ENCODE measurements at regions of chr2 and their contacts with region 1.

Region 1: DNA sequence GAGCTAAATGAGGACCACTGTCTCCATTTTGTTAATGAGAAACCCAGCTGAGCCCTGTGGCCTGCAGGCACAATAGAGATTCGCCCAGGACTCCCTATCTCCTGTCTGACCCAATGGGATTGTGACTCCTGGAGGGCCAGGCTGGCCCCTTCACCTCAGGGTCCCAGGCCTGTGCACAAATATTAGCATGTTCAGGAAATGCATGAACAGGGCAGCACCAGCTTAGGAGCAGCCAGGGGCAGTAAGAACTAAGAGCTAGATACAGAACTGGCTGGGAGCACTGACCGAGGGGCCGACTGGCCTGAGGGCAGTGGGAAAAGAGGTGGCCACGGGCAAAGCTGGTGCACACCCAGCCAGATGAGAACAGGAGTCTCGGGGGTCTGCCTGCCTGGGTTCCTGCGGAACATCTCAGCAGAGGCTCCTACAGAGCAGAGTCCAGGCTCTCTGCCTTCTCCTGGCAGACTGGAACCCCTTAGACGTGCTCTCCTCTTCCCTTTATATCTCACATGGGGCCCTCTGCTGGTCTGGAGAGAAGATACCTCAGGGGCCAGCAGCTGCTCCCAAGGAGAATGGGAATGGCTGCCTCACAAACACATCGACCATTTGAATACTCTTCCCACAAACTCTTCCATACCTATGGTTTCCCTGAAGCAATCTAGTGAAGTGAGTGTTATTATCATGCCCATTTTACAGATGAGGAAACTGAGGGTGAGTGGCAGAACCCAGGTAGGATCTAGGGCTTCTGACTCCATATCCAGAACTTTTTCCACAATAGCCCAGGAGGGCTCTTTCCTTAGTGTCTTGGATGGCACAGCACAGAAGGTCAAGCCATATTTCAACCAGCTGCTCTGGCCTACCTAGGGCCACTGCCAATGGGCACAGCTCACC is 77.6 kb upstream of the OTOF start:
- DNase-seq: peak; percentile 37 to 47
- ATAC-seq: peak in 1 of 2 experiments; percentile 79; a peak in 3 of 6 replicates
- H3K4me3 ChIP-seq: no peak overlapping the region
- H3K27ac ChIP-seq: no peak overlapping the region
- H3K4me1 ChIP-seq: no peaks in the 10 kb centered on the region
- CTCF ChIP-seq: peak; percentile 20; the same call in 2 of the 3 replicates
- EP300 ChIP-seq: no peak
- POLR2A ChIP-seq: no peak
- RAD21 ChIP-seq: peak in 1 of 2 experiments; percentile 10; a peak in 1 of 5 replicates

Region 2: DNA sequence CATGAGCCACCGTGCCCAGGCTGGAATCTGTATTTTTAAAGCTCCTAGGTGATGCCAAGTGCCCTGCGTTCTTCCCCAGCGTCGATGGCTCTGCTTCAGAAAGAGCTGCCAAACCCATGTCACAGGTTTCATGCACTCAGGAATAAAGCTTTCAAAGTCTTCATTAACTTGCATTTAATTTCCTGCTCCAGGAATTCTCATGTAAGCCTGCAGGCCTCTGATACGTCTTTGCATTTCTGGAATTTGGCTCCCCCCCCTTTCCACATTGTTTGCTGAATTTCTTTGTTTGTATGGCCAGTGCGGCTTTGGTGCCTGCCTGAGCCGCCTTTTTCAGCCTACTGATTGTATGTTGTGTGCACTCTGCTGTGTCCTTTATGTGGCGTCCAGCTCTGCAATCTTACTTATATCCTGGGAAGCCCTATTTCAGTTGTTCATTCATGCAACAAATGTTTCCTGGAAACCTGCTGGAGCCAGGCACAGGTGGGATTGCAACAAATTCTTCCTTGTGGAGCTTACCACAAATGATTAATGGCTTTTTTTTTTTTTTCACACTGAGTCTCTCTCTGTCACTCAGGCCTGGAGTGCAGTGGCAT is 59.7 kb before region 1 on chr2:
- CTCF ChIA-PET with region 1: no interaction called
- POLR2A ChIA-PET with region 1: no interaction called
- DNase-seq: no peak
- ATAC-seq: no peak
- H3K4me3 ChIP-seq: no peak overlapping the region
- H3K27ac ChIP-seq: no peak overlapping the region
- H3K4me1 ChIP-seq: no peaks in the 10 kb centered on the region
- CTCF ChIP-seq: no peak
- EP300 ChIP-seq: no peak
- POLR2A ChIP-seq: no peak
- RAD21 ChIP-seq: no peak

Region 3: GRCh38 chr2:26514045-26514444 is 41.4 kb before region 1 on chr2:
- CTCF ChIA-PET with region 1: no interaction called
- POLR2A ChIA-PET with region 1: no interaction called
- DNase-seq: no peak
- ATAC-seq: no peak
- H3K4me3 ChIP-seq: no peak overlapping the region
- H3K27ac ChIP-seq: no peak overlapping the region
- H3K4me1 ChIP-seq: no peaks in the 10 kb centered on the region
- CTCF ChIP-seq: no peak
- EP300 ChIP-seq: no peak
- POLR2A ChIP-seq: no peak
- RAD21 ChIP-seq: no peak

Region 4: DNA sequence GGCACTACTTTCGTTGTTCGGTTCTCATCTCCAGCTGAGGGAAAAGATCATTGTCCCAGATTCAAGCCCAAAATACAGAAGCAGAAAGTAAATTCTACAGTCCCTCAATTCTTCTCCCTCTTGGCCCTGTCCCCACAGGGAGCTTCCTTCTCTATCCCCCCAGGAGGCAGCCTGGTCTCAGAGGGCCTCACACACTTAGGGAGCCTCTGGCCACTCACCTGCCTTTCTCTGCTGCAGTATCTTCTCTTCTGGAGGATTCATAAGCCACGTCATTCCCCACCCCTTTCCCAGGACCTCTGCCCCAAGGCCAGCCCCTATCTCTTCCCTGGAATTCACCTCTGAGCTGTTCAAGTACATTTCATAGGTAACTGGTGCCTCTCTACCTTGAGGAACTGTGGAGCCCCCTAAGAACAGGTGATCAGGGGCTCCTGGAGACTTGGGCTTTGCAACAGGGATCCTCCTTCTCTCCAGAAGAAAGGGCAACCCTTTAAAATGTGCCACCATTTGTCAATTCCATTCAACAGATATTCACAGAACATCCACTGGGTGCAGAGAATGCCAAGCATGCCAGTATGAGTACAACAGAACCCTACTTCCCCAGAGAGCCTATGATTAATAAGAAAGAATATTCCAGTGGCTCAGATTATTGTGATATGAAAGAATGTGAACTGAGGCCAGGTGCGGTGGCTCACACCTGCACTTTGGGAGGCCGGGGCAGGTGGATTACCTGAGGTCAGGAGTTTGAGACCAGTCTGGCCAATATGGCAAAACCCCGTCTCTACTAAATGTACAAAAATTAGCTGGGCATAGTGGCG is 12.8 kb after region 1 on chr2:
- CTCF ChIA-PET with region 1: interaction called, 237 read pairs
- POLR2A ChIA-PET with region 1: no interaction called
- DNase-seq: no peak
- ATAC-seq: no peak
- H3K4me3 ChIP-seq: no peak overlapping the region
- H3K27ac ChIP-seq: no peak overlapping the region
- H3K4me1 ChIP-seq: no peaks in the 10 kb centered on the region
- CTCF ChIP-seq: no peak
- EP300 ChIP-seq: no peak
- POLR2A ChIP-seq: no peak
- RAD21 ChIP-seq: no peak

Region 5: GRCh38 chr2:27042159-27042661 is 486.7 kb after region 1 on chr2:
- CTCF ChIA-PET with region 1: no interaction called
- POLR2A ChIA-PET with region 1: no interaction called
- DNase-seq: no peak
- ATAC-seq: no peak
- H3K4me3 ChIP-seq: no peak overlapping the region
- H3K27ac ChIP-seq: no peak overlapping the region
- H3K4me1 ChIP-seq: no peaks in the 10 kb centered on the region
- CTCF ChIP-seq: no peak
- EP300 ChIP-seq: no peak
- POLR2A ChIP-seq: no peak
- RAD21 ChIP-seq: no peak